Caco-2 (cell line): ENCODE measurements at regions of chr10 and their contacts with region 1.

Region 1: GRCh38 chr10:2938869-2939268 is 128.5 kb upstream of the PFKP start:
- DNase-seq: no peak
- H3K4me3 ChIP-seq: no peak overlapping the region
- H3K4me3 Mint-ChIP-seq: no peak overlapping the region
- H3K27ac Mint-ChIP-seq: no peak overlapping the region
- H3K4me1 ChIP-seq: no peaks in the 10 kb centered on the region
- H3K4me1 Mint-ChIP-seq: peaks cover under 1% of the 10 kb centered on the region
- H3K27me3 ChIP-seq: no peaks in the 10 kb centered on the region; the same call in 1 of the 2 replicates
- H3K27me3 Mint-ChIP-seq: peaks cover 40% of the 10 kb centered on the region
- CTCF ChIP-seq: no peak

Region 2: GRCh38 chr10:2701802-2702201 is 237.1 kb before region 1 on chr10:
- CTCF ChIA-PET with region 1: no interaction called
- POLR2A ChIA-PET with region 1: interaction called, 13 read pairs
- intact Hi-C with region 1: no loop called
- DNase-seq: no peak
- H3K4me3 ChIP-seq: no peak overlapping the region
- H3K4me3 Mint-ChIP-seq: no peak overlapping the region
- H3K27ac Mint-ChIP-seq: no peak overlapping the region
- H3K4me1 ChIP-seq: no peaks in the 10 kb centered on the region
- H3K4me1 Mint-ChIP-seq: no peaks in the 10 kb centered on the region
- H3K27me3 ChIP-seq: no peaks in the 10 kb centered on the region
- H3K27me3 Mint-ChIP-seq: peaks cover 2% of the 10 kb centered on the region
- CTCF ChIP-seq: no peak

Region 3: DNA sequence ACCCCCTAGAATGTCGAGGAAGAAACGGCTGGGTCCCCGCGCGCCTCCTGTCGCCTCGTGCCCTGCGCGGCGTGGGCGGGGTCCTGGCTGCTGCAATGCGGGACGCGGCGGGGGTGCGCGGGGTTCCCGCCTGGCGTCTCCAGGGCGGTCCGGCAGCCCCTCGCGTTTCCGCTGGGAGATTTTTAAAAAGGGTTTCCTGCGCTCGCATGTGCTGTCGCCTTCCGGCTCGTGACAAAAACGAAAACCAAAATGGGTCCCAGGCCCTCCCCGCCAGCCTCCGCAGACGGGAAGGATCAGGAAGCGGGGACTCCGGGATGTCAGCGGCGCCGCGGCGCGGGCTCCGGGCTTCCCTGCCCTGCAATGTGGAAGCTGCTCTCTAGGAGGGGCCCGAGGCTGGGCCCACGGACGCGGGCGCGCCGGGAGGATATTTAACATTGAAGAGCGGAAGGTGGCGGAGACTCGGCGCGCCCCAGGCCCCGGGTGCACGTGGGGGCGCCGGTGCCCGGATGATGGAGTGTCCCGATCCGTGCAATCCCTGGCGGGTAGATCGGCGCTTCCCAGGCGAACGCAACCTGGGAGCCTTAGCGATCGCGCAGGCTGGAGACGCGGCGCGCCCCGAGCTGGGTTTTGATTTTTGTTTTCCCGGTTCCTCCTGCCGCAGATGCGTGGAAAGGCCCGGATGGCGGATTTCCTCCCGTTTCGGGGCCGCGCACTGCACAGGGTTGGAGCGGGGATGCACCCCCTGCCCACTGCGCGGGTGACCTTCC is 129.5 kb after region 1 on chr10:
- CTCF ChIA-PET with region 1: no interaction called
- POLR2A ChIA-PET with region 1: no interaction called
- intact Hi-C with region 1: no loop called
- DNase-seq: peak; percentile 67 to 76
- H3K4me3 ChIP-seq: peak overlapping the region; percentile 97
- H3K4me3 Mint-ChIP-seq: peak overlapping the region; percentile 95
- H3K27ac Mint-ChIP-seq: peak overlapping the region; percentile 64
- H3K4me1 ChIP-seq: peaks cover 31% of the 10 kb centered on the region
- H3K4me1 Mint-ChIP-seq: peaks cover 34% of the 10 kb centered on the region
- H3K27me3 ChIP-seq: no peaks in the 10 kb centered on the region
- H3K27me3 Mint-ChIP-seq: no peaks in the 10 kb centered on the region
- CTCF ChIP-seq: peak; percentile 20 to 41

Region 4: GRCh38 chr10:3126741-3127361 is 188.0 kb after region 1 on chr10:
- CTCF ChIA-PET with region 1: no interaction called
- POLR2A ChIA-PET with region 1: no interaction called
- intact Hi-C with region 1: no loop called
- DNase-seq: no peak
- H3K4me3 ChIP-seq: no peak overlapping the region
- H3K4me3 Mint-ChIP-seq: no peak overlapping the region
- H3K27ac Mint-ChIP-seq: no peak overlapping the region
- H3K4me1 ChIP-seq: peaks cover 12% of the 10 kb centered on the region
- H3K4me1 Mint-ChIP-seq: peaks cover 6% of the 10 kb centered on the region
- H3K27me3 ChIP-seq: no peaks in the 10 kb centered on the region
- H3K27me3 Mint-ChIP-seq: no peaks in the 10 kb centered on the region
- CTCF ChIP-seq: no peak